ENCODE measurements at regions of chr3 and their contacts with region 1.

Region 1: DNA sequence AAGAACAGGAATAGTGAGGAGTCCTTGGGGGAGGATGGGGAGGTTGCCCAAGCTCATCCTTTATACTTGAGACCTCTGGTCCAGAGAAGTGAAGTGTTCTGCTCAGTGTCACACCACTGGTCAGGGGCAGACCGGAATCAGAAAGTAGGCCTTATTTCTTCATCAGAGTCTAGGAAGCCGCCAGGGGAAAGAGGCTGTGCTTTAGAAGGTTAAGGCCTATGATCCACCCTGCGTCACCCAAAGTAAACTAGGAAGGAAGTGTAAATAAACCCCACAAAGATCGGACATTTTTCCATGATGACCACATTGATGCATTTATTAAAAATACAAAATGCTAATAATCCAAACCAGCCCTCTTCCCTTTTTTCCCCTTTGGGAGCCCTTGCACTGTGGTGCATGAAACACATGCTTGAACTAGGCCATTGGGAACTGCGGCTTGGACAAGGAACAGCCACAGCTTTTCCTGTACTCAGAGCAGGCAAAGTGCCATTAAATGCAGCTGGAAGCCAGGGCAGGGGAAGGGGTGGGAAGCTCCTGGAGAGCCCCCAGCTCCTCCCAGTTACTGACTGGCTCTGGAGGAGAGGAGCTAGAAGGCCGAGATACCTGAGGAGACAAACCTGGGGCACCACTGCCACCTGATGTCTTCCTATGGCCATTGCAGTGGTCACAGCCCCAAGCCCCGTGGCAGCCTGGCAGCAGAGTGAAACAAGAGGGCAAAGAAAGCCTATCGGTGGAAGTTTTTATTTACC is 37.0 kb downstream of the CDC25A start:
- DNase-seq: peak; percentile 77 to 90
- H3K4me3 ChIP-seq: no peak overlapping the region
- H3K27ac ChIP-seq: no peak overlapping the region
- H3K4me1 ChIP-seq: no peaks in the 10 kb centered on the region; a peak in 1 of 7 replicates
- H3K27me3 ChIP-seq: no peaks in the 10 kb centered on the region
- CTCF ChIP-seq: peak; percentile 93 to 96 (median 95)
- EP300 ChIP-seq: no peak
- POLR2A ChIP-seq: no peak
- RAD21 ChIP-seq: peak; percentile 100

Region 2: DNA sequence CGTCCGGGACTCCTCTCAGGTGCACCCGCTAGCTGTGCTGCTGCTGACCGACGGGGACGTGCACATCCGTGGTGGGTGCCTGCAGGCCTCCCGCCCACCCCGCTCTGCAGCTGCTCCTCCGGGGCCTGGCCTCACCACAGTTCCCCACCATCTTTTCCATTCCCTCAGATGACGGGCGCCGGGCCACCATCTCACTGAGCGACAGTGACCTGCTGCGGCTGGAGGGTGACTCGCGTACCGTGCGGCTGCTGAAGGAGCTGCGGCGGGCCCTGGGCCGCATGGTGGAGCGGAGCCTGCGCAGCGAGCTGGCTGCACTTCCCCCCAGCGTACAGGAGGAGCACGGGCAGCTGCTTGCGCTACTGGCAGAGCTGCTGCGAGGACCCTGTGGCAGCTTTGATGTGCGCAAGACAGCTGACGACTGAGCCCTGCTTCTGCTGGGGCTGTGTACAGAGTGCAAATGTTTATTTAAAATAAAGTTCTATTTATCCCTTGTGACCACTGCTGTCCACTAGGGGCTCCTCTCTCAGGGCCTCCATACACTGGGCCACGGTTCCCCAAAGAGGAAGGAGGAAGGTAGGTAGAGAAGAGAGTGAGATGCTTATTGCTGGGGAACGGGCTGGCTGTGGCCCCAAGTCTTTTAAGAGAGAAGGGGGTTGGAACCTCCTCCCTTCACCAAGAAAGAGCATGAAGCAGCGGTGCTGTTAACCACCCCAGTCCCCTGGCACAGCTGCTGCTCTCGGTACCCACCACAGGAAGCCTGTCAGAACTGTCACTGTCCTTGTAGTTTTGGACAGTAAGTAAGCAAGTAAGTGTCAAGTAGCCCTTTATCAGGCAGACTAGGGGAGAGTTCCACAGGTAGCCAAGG is 301.3 kb before region 1 on chr3:
- CTCF ChIA-PET with region 1: interaction called, 31 read pairs
- POLR2A ChIA-PET with region 1: interaction called, 10 read pairs
- DNase-seq: peak in 1 of 2 experiments; percentile 52
- H3K4me3 ChIP-seq: no peak overlapping the region
- H3K27ac ChIP-seq: no peak overlapping the region
- H3K4me1 ChIP-seq: no peaks in the 10 kb centered on the region
- H3K27me3 ChIP-seq: no peaks in the 10 kb centered on the region
- CTCF ChIP-seq: peak in 2 of 3 experiments; percentile 32 to 53; a peak in 3 of 4 replicates
- EP300 ChIP-seq: no peak
- POLR2A ChIP-seq: no peak; a peak in 1 of 3 replicates
- RAD21 ChIP-seq: peak; percentile 39 to 46; a peak in 3 of 4 replicates

Region 3: DNA sequence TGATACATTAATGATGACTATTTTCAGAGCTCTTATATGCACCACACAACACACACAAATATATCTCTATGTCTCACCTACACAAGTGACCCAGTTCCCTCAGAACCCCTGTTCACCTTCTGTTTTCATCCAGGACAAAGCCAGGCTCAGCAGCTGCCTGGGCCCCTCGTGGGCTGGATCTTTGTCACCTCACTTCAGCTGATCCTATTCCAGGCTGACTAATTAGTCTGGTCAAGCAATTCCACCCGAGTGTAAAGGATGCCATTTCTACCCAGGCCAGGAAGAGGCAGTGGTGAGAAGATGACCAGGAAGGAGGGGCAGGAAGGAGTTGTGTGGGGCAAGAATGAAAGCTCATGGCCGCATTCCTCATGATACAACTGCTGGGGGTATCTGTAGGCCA is 286.0 kb before region 1 on chr3:
- CTCF ChIA-PET with region 1: interaction called, 14 read pairs
- POLR2A ChIA-PET with region 1: interaction called, 3 read pairs
- DNase-seq: no peak
- H3K4me3 ChIP-seq: no peak overlapping the region
- H3K27ac ChIP-seq: no peak overlapping the region
- H3K4me1 ChIP-seq: no peaks in the 10 kb centered on the region
- H3K27me3 ChIP-seq: no peaks in the 10 kb centered on the region
- CTCF ChIP-seq: peak in 1 of 3 experiments; percentile 28; a peak in 2 of 4 replicates
- EP300 ChIP-seq: no peak
- POLR2A ChIP-seq: no peak
- RAD21 ChIP-seq: peak; percentile 30 to 43; a peak in 3 of 4 replicates

Region 4: GRCh38 chr3:47989981-47990440 is 161.2 kb before region 1 on chr3:
- CTCF ChIA-PET with region 1: interaction called, 15 read pairs
- POLR2A ChIA-PET with region 1: no interaction called
- DNase-seq: peak; percentile 54 to 62
- H3K4me3 ChIP-seq: no peak overlapping the region
- H3K27ac ChIP-seq: no peak overlapping the region
- H3K4me1 ChIP-seq: no peaks in the 10 kb centered on the region; a peak in 1 of 7 replicates
- H3K27me3 ChIP-seq: no peaks in the 10 kb centered on the region
- CTCF ChIP-seq: peak; percentile 72 to 97 (median 90)
- EP300 ChIP-seq: no peak
- POLR2A ChIP-seq: no peak
- RAD21 ChIP-seq: peak; percentile 93 to 95

Region 5: GRCh38 chr3:48125026-48125705 is 26.1 kb before region 1 on chr3:
- CTCF ChIA-PET with region 1: interaction called, 10 read pairs
- POLR2A ChIA-PET with region 1: interaction called, 4 read pairs
- DNase-seq: peak in 1 of 2 experiments; percentile 43
- H3K4me3 ChIP-seq: no peak overlapping the region
- H3K27ac ChIP-seq: no peak overlapping the region
- H3K4me1 ChIP-seq: peaks cover 0 to 5% (median 1%) of the 10 kb centered on the region in 4 experiments; a peak in 4 of 7 replicates
- H3K27me3 ChIP-seq: no peaks in the 10 kb centered on the region
- CTCF ChIP-seq: no peak
- EP300 ChIP-seq: no peak
- POLR2A ChIP-seq: no peak
- RAD21 ChIP-seq: no peak

Region 6: GRCh38 chr3:48190911-48191310 is 39.7 kb after region 1 on chr3:
- CTCF ChIA-PET with region 1: no interaction called
- POLR2A ChIA-PET with region 1: no interaction called
- DNase-seq: no peak
- H3K4me3 ChIP-seq: peak overlapping the region in 1 of 4 experiments; percentile 5; a peak in 1 of 8 replicates
- H3K27ac ChIP-seq: no peak overlapping the region
- H3K4me1 ChIP-seq: peaks cover 2 to 12% (median 8%) of the 10 kb centered on the region in 4 experiments; a peak in 6 of 7 replicates
- H3K27me3 ChIP-seq: no peaks in the 10 kb centered on the region
- CTCF ChIP-seq: no peak
- EP300 ChIP-seq: no peak
- POLR2A ChIP-seq: no peak
- RAD21 ChIP-seq: no peak